IMR-90 (cell line): ENCODE measurements at regions of chr1 and their contacts with region 1.

Region 1: GRCh38 chr1:98053471-98054366 is 132.9 kb upstream of the DPYD start:
- DNase-seq: peak; percentile 65
- ATAC-seq: peak; percentile 92
- H3K4me3 ChIP-seq: peak overlapping the region; percentile 41
- H3K27ac ChIP-seq: peak overlapping the region; percentile 60
- H3K4me1 ChIP-seq: peaks cover 5% of the 10 kb centered on the region
- H3K27me3 ChIP-seq: no peaks in the 10 kb centered on the region
- CTCF ChIP-seq: peak; percentile 74
- POLR2A ChIP-seq: no peak
- RAD21 ChIP-seq: peak; percentile 70

Region 2: DNA sequence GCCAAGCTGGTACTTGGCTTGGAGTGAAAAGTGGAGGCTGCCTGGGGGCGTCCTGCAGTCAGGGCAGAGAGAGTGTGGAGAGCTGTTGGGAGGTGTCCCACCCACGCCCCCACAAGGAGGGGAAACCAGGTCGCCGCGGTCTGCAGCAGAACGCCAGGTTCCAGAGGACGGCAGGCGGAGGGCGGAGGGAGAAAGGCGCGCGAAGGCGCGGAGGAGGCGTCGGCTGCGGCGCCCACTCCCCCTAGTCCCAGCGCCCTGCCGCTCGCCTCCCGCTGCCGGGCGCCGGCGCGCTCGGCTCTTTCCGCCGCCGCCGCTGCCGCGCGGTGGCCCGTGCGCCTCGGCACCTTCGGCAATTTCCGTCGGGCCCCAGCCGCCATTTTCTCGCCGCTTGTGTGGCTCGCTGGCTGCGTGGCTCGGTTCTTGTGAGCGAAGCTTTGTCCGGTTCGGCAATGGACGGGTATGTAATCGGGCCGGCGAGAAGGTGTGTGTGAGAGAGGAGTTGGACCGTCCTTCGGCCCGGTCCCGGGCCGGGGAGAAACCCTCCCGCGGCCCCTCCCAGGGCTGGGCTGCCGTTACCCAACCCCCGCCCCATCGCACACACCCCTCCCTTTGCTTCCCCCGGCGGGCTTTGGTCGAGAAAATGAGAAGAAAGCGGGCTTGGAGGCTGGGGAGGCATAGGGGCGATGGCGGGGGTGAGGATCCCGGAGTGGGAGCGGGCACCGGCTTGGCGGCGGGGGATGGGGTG is 1332.1 kb before region 1 on chr1 and contains the start of gene PTBP2:
- CTCF ChIA-PET with region 1: no interaction called
- POLR2A ChIA-PET with region 1: no interaction called
- dilution Hi-C with region 1: no loop called
- in situ Hi-C with region 1: no loop called
- intact Hi-C with region 1: loop called (anchors 5 kb)
- DNase-seq: peak; percentile 69
- ATAC-seq: peak; percentile 96
- H3K4me3 ChIP-seq: peak within 1 kb of the TSS; percentile 96
- H3K27ac ChIP-seq: peak within 1 kb of the TSS; percentile 96
- H3K4me1 ChIP-seq: no peaks in the 10 kb centered on the region; the same call in 1 of the 2 replicates
- H3K27me3 ChIP-seq: no peaks in the 10 kb centered on the region
- CTCF ChIP-seq: no peak
- POLR2A ChIP-seq: peak; percentile 74; the same call in 1 of the 2 replicates
- RAD21 ChIP-seq: no peak
- total RNA-seq, gene PTBP2: 37.8 and 38.6 TPM in 2 replicates

Region 3: GRCh38 chr1:97243973-97244560 is 809.7 kb before region 1 on chr1:
- CTCF ChIA-PET with region 1: no interaction called
- POLR2A ChIA-PET with region 1: no interaction called
- dilution Hi-C with region 1: no loop called
- in situ Hi-C with region 1: no loop called
- intact Hi-C with region 1: no loop called
- DNase-seq: peak; percentile 29
- ATAC-seq: 0 out of 2 replicates have a peak, but pooled peaks have one; percentile 51
- H3K4me3 ChIP-seq: no peak overlapping the region
- H3K27ac ChIP-seq: no peak overlapping the region
- H3K4me1 ChIP-seq: no peaks in the 10 kb centered on the region
- H3K27me3 ChIP-seq: no peaks in the 10 kb centered on the region
- CTCF ChIP-seq: peak; percentile 55
- POLR2A ChIP-seq: no peak
- RAD21 ChIP-seq: peak; percentile 63

Region 4: GRCh38 chr1:97820470-97821188 is 233.1 kb before region 1 on chr1:
- CTCF ChIA-PET with region 1: no interaction called
- POLR2A ChIA-PET with region 1: interaction called, 8 read pairs
- dilution Hi-C with region 1: no loop called
- in situ Hi-C with region 1: no loop called
- intact Hi-C with region 1: loop called (anchors 1 kb)
- DNase-seq: peak; percentile 58
- ATAC-seq: peak; percentile 82
- H3K4me3 ChIP-seq: no peak overlapping the region
- H3K27ac ChIP-seq: no peak overlapping the region
- H3K4me1 ChIP-seq: no peaks in the 10 kb centered on the region
- H3K27me3 ChIP-seq: no peaks in the 10 kb centered on the region
- CTCF ChIP-seq: peak; percentile 66
- POLR2A ChIP-seq: no peak
- RAD21 ChIP-seq: peak; percentile 78

Region 5: GRCh38 chr1:98084188-98084587 is 30.5 kb after region 1 on chr1:
- CTCF ChIA-PET with region 1: no interaction called
- POLR2A ChIA-PET with region 1: no interaction called
- dilution Hi-C with region 1: no loop called
- in situ Hi-C with region 1: no loop called
- intact Hi-C with region 1: loop called (anchors 2 kb)
- DNase-seq: peak; percentile 62
- ATAC-seq: peak; percentile 57
- H3K4me3 ChIP-seq: no peak overlapping the region
- H3K27ac ChIP-seq: peak overlapping the region; percentile 90
- H3K4me1 ChIP-seq: peaks cover 7% of the 10 kb centered on the region
- H3K27me3 ChIP-seq: no peaks in the 10 kb centered on the region
- CTCF ChIP-seq: no peak
- POLR2A ChIP-seq: no peak
- RAD21 ChIP-seq: no peak

Region 6: GRCh38 chr1:98201666-98202081 is 148.0 kb after region 1 on chr1:
- CTCF ChIA-PET with region 1: no interaction called
- POLR2A ChIA-PET with region 1: no interaction called
- dilution Hi-C with region 1: no loop called
- in situ Hi-C with region 1: no loop called
- intact Hi-C with region 1: loop called (anchors 5 kb)
- DNase-seq: peak; percentile 96
- ATAC-seq: peak; percentile 92
- H3K4me3 ChIP-seq: peak overlapping the region; percentile 1; the same call in 1 of the 2 replicates
- H3K27ac ChIP-seq: peak overlapping the region; percentile 71
- H3K4me1 ChIP-seq: peaks cover 11% of the 10 kb centered on the region
- H3K27me3 ChIP-seq: no peaks in the 10 kb centered on the region
- CTCF ChIP-seq: no peak
- POLR2A ChIP-seq: no peak
- RAD21 ChIP-seq: no peak

Region 7: GRCh38 chr1:98468111-98468717 is 414.5 kb after region 1 on chr1:
- CTCF ChIA-PET with region 1: interaction called, 10 read pairs
- POLR2A ChIA-PET with region 1: no interaction called
- dilution Hi-C with region 1: no loop called
- in situ Hi-C with region 1: loop called (anchors 5 kb)
- intact Hi-C with region 1: loop called (anchors 1 kb)
- DNase-seq: peak; percentile 81
- ATAC-seq: peak; percentile 65; the same call in 1 of the 2 replicates
- H3K4me3 ChIP-seq: no peak overlapping the region
- H3K27ac ChIP-seq: no peak overlapping the region
- H3K4me1 ChIP-seq: peaks cover 2% of the 10 kb centered on the region; the same call in 1 of the 2 replicates
- H3K27me3 ChIP-seq: no peaks in the 10 kb centered on the region
- CTCF ChIP-seq: peak; percentile 96
- POLR2A ChIP-seq: no peak
- RAD21 ChIP-seq: peak; percentile 95

Region 8: GRCh38 chr1:98480271-98480670 is 426.6 kb after region 1 on chr1:
- CTCF ChIA-PET with region 1: no interaction called
- POLR2A ChIA-PET with region 1: no interaction called
- dilution Hi-C with region 1: no loop called
- in situ Hi-C with region 1: no loop called
- intact Hi-C with region 1: no loop called
- DNase-seq: peak; percentile 30
- ATAC-seq: no peak
- H3K4me3 ChIP-seq: no peak overlapping the region
- H3K27ac ChIP-seq: no peak overlapping the region
- H3K4me1 ChIP-seq: no peaks in the 10 kb centered on the region
- H3K27me3 ChIP-seq: no peaks in the 10 kb centered on the region
- CTCF ChIP-seq: no peak
- POLR2A ChIP-seq: no peak
- RAD21 ChIP-seq: no peak